Aorta (tissue), 5 donors: ENCODE measurements at regions of chr19 and their contacts with region 1.

Region 1: DNA sequence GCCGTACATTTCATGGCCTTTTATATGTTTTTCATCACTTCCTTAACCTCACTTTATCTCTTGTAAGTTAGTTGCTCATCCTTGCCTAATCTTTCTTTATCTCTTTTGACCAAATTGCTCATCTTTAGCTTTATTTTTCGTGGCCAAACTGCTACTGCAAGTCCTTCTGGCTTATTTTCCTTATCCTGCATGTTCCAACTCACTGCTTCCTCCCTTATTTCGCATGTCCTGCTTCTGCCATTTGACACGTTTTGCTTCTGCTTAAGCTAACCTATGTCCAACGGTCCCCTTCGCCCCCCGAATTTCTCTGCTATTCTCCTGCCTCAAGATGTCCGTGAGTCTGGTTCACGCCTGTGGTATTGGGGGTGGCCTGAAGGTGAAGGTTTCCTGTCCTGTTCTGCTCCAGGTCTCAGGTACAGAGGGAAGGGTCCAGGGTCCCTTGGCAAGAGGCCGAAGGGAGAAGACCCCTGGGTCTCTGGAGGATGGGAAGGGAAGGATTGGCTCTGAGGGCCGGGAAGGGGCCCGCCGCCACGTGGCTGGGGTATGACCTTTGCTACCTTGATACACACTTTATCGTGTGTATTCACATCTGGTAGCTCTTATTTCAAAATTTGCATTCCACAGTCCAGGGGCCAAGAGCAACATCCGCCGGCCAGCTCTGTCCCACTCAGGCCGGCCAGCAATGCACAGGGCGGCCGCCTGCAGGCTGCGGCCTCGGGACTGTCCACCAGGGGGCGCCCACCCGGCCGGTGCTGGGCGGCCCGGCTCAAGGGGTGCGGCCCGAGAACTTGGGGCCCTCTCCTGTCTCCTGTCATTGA is 2.9 kb upstream of the C19orf85 start:
- DNase-seq: peak; percentile 82 to 92
- ATAC-seq: peak; percentile 94
- H3K4me3 ChIP-seq: no peak overlapping the region
- H3K27ac ChIP-seq: no peak overlapping the region
- H3K4me1 ChIP-seq: no peaks in the 10 kb centered on the region
- H3K27me3 ChIP-seq: no peaks in the 10 kb centered on the region

Region 2: GRCh38 chr19:55503502-55504251 is 36.2 kb after region 1 on chr19:
- intact Hi-C with region 1: loop called (anchors 2 to 5 kb)
- DNase-seq: peak; percentile 96 to 98
- ATAC-seq: peak; percentile 98
- H3K4me3 ChIP-seq: peak overlapping the region in 1 of 2 donors; percentile 7
- H3K27ac ChIP-seq: no peak overlapping the region
- H3K4me1 ChIP-seq: no peaks in the 10 kb centered on the region
- H3K27me3 ChIP-seq: no peaks in the 10 kb centered on the region